PC-3 (cell line): ENCODE measurements at regions of chr14 and their contacts with region 1.

Region 1: DNA sequence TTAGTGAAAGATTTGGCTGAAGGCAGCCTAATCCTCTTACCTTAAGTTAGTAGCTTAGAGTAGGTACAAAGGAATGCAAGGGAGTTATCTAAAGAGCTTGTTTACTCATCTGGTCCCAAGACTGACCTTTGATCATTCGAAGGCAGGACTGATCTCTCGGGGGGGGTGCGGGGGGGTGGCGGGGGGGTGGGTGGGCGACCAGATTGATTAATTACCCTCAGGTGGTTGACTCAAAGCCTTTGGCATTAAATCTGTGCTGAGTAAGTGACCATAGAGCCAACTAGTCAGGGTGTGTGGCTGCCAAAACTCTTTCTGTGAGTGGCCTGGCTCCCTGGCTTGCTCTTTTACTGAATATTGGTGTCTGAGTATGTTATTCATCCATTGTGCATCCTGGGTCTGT is 731.9 kb upstream of the FBXO33 start:
- DNase-seq: peak; percentile 93
- ATAC-seq: peak; percentile 98
- H3K4me3 ChIP-seq: no peak overlapping the region
- H3K27ac ChIP-seq: peak overlapping the region; percentile 66
- H3K4me1 ChIP-seq: peaks cover 21% of the 10 kb centered on the region
- H3K27me3 ChIP-seq: no peaks in the 10 kb centered on the region
- CTCF ChIP-seq: no peak

Region 2: DNA sequence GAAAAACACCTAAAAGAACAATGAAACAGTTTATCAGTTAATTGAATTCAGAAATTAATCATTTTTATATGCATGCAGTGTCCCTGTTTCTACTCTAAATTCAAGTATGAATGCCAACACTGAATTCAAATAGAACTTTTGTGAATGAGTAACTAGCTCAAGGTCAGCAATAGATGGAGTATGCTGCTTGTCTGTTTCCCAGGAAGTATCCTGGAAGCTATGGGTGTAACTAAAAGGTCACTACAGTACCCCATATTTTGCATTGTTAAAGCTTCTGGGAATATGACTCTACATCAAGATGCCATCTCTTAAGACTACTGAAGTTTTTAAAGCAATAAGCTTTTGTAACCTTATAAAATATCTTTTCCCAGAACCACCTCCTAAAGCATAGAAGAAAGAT is 50.4 kb before region 1 on chr14:
- CTCF ChIA-PET with region 1: no interaction called
- POLR2A ChIA-PET with region 1: no interaction called
- intact Hi-C with region 1: loop called (anchors 2 kb)
- DNase-seq: no peak
- ATAC-seq: no peak
- H3K4me3 ChIP-seq: no peak overlapping the region
- H3K27ac ChIP-seq: no peak overlapping the region
- H3K4me1 ChIP-seq: peaks cover 19% of the 10 kb centered on the region; the same call in 1 of the 2 replicates
- H3K27me3 ChIP-seq: no peaks in the 10 kb centered on the region
- CTCF ChIP-seq: no peak